Sigmoid colon (tissue), 7 donors: ENCODE measurements at regions of chr2 and their contacts with region 1.

Region 1: GRCh38 chr2:202265467-202266277 is at the start of gene NOP58:
- DNase-seq: peak; percentile 97
- H3K4me3 ChIP-seq: peak within 1 kb of the TSS; percentile 73 to 95 (median 80)
- H3K27ac ChIP-seq: peak within 1 kb of the TSS; percentile 94 to 99 (median 96)
- H3K4me1 ChIP-seq: peaks cover 0 to 30% (median 28%) of the 10 kb centered on the region in 4 donors
- H3K27me3 ChIP-seq: no peaks in the 10 kb centered on the region
- CTCF ChIP-seq: no peak
- EP300 ChIP-seq: peak in 2 of 4 donors; percentile 61 to 91
- POLR2A ChIP-seq: peak; percentile 97
- total RNA-seq, gene NOP58: 35.9 to 91.1 (median 40.6) TPM

Region 2: GRCh38 chr2:202030691-202031090 is 235.0 kb before region 1 on chr2:
- intact Hi-C with region 1: no loop called
- DNase-seq: no peak
- H3K4me3 ChIP-seq: no peak overlapping the region
- H3K27ac ChIP-seq: peak overlapping the region in 2 of 4 donors; percentile 99
- H3K4me1 ChIP-seq: peaks cover 0 to 19% (median 5%) of the 10 kb centered on the region in 4 donors
- H3K27me3 ChIP-seq: peaks cover 0 to 5% (median 0%) of the 10 kb centered on the region in 3 donors
- CTCF ChIP-seq: no peak
- EP300 ChIP-seq: no peak
- POLR2A ChIP-seq: no peak

Region 3: GRCh38 chr2:202238234-202239197 is 27.2 kb before region 1 on chr2 and contains the start of gene SUMO1:
- intact Hi-C with region 1: loop called (anchors 1 kb)
- DNase-seq: peak; percentile 93
- H3K4me3 ChIP-seq: peak within 1 kb of the TSS; percentile 86 to 97 (median 94)
- H3K27ac ChIP-seq: peak within 1 kb of the TSS; percentile 90 to 98 (median 94)
- H3K4me1 ChIP-seq: peaks cover 0 to 30% (median 28%) of the 10 kb centered on the region in 4 donors
- H3K27me3 ChIP-seq: no peaks in the 10 kb centered on the region
- CTCF ChIP-seq: no peak
- EP300 ChIP-seq: no peak
- POLR2A ChIP-seq: peak; percentile 44 to 63
- total RNA-seq, gene SUMO1: 56.2 to 98.4 (median 76.1) TPM

Region 4: DNA sequence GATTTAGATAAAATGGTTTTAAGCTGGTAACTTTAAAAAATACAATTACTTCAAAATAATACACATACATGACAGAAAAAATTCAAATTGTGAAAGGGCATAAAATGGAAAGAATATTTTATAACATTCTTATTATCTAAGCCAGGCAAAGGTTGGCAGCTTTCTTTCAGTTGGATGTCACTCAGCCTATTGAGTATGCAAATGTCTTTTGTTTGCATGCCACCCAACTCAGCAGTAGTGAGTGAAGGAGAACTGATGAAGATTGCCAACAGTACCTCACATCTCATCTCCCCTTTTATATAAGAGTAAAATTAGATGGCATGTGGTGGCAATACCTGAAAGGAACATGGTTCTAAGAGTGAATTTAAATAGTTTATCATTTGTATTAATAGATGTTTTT is 135.3 kb after region 1 on chr2:
- intact Hi-C with region 1: no loop called
- DNase-seq: no peak
- H3K4me3 ChIP-seq: no peak overlapping the region
- H3K27ac ChIP-seq: no peak overlapping the region
- H3K4me1 ChIP-seq: peaks cover 0 to under 1% (median 0%) of the 10 kb centered on the region in 4 donors
- H3K27me3 ChIP-seq: no peaks in the 10 kb centered on the region
- CTCF ChIP-seq: no peak
- EP300 ChIP-seq: no peak
- POLR2A ChIP-seq: no peak